Heart right ventricle (tissue), 16 donors: ENCODE measurements at regions of chr10 and their contacts with region 1.

Region 1: DNA sequence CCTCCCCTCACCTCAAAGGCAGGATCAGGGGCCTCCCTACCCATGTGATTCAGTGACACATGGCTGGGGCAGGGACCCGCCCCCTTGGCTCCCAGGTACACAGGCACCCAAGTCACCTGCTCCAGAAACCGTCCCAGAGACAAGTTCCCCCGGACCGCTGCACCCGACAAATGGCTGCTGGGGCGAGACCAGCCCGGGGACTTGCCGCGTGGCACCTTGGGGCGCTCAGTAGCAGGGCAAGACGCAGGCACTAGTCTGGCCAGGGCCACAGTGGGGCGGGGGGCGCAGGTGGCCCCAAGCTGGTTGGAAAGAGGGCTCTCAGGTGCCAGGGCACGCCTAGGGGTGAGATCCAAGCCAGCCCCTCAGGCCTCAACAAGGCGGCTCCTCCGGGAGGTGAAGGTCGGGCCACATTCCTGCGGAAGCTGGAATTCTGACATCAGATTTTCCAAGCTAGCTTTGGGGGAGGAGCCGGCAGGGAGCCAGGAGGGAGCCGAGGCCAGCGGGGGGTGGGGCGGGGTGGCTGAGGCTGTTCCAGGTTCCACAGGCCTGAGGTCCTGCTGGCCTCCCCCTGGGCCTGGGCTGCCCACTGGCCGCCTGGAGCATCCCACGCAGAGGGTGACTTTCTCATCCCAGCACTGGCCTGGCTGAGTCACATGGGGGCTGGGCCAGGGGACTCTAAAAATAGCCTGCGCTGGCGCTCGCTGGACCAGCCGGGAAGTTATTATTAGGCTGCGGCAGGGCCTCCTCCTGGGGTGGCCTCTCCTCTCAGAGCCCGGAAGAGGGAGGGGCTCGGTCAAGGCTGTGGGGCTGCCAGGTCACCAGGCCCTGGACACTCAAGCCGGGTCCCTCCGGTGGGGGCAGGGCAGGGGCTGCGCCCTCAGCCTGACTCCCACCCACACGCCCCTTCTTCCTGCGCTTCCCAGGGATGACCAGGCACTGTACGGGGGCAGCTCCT is 20.5 kb upstream of the INPP5A start:
- DNase-seq: peak; percentile 93 to 95
- ATAC-seq: peak; percentile 84 to 93 (median 88)
- H3K4me3 ChIP-seq: peak overlapping the region; percentile 26 to 55 (median 41)
- H3K27ac ChIP-seq: peak overlapping the region; percentile 76 to 98 (median 96)
- H3K4me1 ChIP-seq: peaks cover 46 to 76% (median 68%) of the 10 kb centered on the region in 9 donors
- H3K27me3 ChIP-seq: no peaks in the 10 kb centered on the region
- CTCF ChIP-seq: no peak

Region 2: DNA sequence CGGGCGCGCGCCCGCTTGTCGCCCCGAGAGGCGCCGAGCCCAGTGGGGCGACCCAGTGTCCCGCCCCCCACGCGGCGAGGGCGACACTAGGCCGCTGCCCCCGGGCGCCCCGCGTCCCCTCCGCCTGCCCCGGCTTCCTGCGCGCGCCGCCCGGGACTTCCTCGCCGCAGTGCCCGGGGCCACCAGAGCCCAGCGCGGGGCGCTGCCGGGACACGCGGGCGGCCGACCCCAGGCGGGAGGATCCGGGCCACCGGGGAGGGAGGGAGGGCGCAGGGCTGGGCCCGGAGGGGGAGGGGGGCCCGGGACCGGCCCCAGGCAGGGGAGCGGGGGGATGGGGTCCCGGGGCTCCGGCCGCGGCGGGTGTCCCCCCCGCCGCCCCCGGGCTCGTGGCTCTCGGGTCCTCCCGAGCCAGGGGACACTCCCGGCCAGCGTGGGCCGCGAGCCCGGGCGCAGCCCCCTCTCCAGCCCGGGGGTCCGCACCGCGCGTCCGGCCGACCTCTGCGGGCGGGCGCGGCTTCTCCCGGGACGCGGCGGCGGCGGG is 120.5 kb before region 1 on chr10:
- intact Hi-C with region 1: loop called in 1 of 10 experiments (anchors 5 kb)
- DNase-seq: peak; percentile 58 to 73
- ATAC-seq: peak; percentile 7 to 57 (median 43)
- H3K4me3 ChIP-seq: peak overlapping the region; percentile 19 to 94 (median 64)
- H3K27ac ChIP-seq: peak overlapping the region; percentile 93 to 99 (median 97)
- H3K4me1 ChIP-seq: peaks cover 17 to 58% (median 49%) of the 10 kb centered on the region in 9 donors
- H3K27me3 ChIP-seq: no peaks in the 10 kb centered on the region
- CTCF ChIP-seq: peak in 6 of 9 donors; percentile 13 to 48 (median 29)

Region 3: GRCh38 chr10:132464253-132465192 is 52.5 kb before region 1 on chr10:
- intact Hi-C with region 1: loop called in 5 of 10 experiments (anchors 5 to 10 kb)
- DNase-seq: peak; percentile 82 to 89
- ATAC-seq: peak; percentile 77 to 87 (median 84)
- H3K4me3 ChIP-seq: peak overlapping the region in 1 of 10 donors; percentile 15
- H3K27ac ChIP-seq: peak overlapping the region; percentile 84 to 99 (median 94)
- H3K4me1 ChIP-seq: peaks cover 25 to 81% (median 68%) of the 10 kb centered on the region in 9 donors
- H3K27me3 ChIP-seq: no peaks in the 10 kb centered on the region
- CTCF ChIP-seq: no peak

Region 4: DNA sequence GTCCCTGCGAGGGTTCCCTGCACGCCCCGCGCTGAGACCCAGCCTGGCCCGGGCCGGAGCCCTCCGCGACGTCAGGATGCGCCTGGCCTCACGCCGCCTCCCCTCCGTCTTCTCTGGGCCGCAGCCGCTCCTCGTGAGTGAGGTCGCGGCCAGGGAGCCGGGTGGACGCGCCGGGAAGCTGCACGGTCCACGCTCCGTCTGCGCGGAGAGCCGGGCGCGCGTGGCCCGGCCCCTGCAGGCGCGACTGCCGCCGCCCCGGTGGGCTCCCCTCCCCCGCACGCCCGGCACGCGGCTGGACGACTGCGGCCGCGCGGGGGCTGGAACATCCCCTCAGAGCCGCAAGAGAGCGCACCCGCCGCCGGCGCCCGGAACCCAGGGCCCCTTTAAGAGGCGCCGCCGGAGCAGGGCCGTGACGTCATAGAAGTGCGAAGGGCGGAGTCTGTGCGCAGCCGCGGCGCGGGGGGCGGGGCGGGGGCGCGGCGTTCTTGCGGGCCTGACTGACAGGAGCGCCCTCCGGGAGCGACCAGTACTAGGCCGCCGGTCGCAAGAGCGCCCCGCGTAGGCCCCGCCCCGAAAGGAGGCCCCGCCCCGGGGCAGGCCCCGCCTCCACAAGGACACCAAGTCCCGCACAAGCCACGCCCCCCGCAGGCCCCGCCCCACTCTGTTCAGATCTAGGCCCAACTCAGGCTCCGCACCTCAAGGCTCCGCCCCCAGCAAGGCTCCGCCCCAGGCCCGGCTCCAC is 20.1 kb after region 1 on chr10:
- intact Hi-C with region 1: loop called in 6 of 10 experiments (anchors 1 to 2 kb)
- DNase-seq: peak; percentile 100
- ATAC-seq: peak; percentile 94 to 97 (median 95)
- H3K4me3 ChIP-seq: peak overlapping the region; percentile 52 to 86 (median 72)
- H3K27ac ChIP-seq: peak overlapping the region; percentile 75 to 97 (median 90)
- H3K4me1 ChIP-seq: peaks cover 24 to 56% (median 54%) of the 10 kb centered on the region in 9 donors
- H3K27me3 ChIP-seq: no peaks in the 10 kb centered on the region
- CTCF ChIP-seq: peak; percentile 22 to 65 (median 44)

Region 5: DNA sequence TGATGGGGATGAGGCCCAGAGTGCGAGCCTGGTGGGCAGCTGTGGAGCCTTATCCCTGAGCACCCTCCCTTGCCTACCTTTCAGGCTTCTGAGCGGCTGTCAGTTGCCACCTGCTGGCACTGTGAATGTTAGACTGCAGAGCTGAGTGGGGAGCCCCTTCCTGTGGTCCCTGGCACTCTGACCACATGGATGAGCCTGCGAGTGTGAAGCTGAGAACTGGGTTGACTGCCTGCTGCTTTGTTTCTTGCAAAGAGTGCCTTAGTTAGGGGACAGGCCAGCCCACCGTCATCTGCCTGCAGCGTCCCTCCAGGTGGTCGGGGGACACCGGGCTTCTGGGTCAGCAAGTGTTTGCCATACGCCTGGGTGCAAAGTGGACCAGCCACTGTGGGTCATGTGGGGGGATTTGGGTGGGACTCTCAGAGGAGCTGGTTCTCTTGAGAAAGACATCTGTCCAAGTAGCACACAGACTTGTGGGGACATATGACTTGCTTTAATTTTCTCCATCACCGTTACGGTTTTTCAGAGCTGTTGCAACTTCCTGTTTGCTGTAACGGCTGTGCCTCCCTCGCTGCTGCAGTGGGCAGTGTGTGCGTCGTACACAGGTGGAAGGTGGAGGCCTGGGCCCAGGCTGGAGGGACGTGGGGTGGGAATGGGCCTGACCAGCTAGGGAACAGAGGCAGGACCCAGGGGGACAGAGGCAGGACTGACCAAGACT is 34.2 kb after region 1 on chr10:
- intact Hi-C with region 1: no loop called
- DNase-seq: peak in 1 of 2 donors; percentile 5
- ATAC-seq: no peak
- H3K4me3 ChIP-seq: peak overlapping the region in 1 of 10 donors; percentile 18
- H3K27ac ChIP-seq: peak overlapping the region in 2 of 10 donors; percentile 41 to 82
- H3K4me1 ChIP-seq: peaks cover 13 to 75% (median 55%) of the 10 kb centered on the region in 9 donors
- H3K27me3 ChIP-seq: no peaks in the 10 kb centered on the region
- CTCF ChIP-seq: no peak

Region 6: GRCh38 chr10:132571650-132572535 is 54.8 kb after region 1 on chr10:
- intact Hi-C with region 1: loop called in 2 of 10 experiments (anchors 5 kb)
- DNase-seq: peak in 1 of 2 donors; percentile 64
- ATAC-seq: peak; percentile 44 to 95 (median 81)
- H3K4me3 ChIP-seq: no peak overlapping the region
- H3K27ac ChIP-seq: peak overlapping the region in 9 of 10 donors; percentile 7 to 58 (median 45)
- H3K4me1 ChIP-seq: peaks cover 35 to 56% (median 51%) of the 10 kb centered on the region in 9 donors
- H3K27me3 ChIP-seq: no peaks in the 10 kb centered on the region
- CTCF ChIP-seq: no peak

Region 7: DNA sequence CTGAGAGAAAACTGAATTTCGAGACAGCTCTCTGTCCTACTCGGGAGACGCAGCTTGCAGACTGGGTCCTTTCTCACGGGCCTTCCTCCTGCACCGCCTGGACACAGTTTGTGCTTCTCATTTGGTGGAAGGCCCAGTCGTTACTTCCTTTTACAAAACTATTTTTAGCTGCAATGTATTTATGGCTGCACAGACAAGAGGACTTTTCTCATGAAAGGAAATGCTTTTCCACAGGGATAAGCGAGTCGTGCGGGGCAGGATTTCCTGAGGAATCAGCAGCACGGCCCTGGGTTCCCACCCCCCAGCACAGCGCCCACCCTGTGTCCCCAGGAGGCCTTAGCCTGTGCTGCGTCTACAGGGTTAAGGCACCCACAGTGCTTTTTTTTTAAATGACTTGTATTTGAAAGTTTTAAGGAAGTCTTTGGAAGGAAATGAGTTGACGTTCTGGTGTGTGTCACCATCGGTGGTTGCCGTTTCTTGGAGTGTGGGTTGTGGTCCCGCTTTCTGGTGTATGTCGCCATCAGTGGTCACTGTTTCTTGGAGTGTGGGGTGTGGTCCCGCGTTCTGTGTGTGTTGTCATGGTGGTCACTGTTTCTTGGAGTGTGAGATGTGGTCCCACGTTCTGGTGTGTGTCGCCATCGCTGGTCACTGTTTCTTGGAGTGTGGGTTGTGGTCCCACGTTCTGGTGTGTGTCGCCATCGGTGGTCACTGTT is 71.4 kb after region 1 on chr10:
- intact Hi-C with region 1: loop called in 2 of 10 experiments (anchors 5 kb)
- DNase-seq: peak; percentile 61 to 84
- ATAC-seq: peak; percentile 47 to 83 (median 75)
- H3K4me3 ChIP-seq: peak overlapping the region in 8 of 10 donors; percentile 17 to 29 (median 24)
- H3K27ac ChIP-seq: peak overlapping the region; percentile 64 to 91 (median 80)
- H3K4me1 ChIP-seq: peaks cover 56 to 100% (median 94%) of the 10 kb centered on the region in 9 donors
- H3K27me3 ChIP-seq: no peaks in the 10 kb centered on the region
- CTCF ChIP-seq: no peak